Calu3 (cell line): ENCODE measurements at regions of chr12 and their contacts with region 1.

Region 1: GRCh38 chr12:109804820-109805761 is 28.1 kb downstream of the TRPV4 start:
- DNase-seq: peak; percentile 80
- H3K4me3 Mint-ChIP-seq: no peak overlapping the region
- H3K27ac Mint-ChIP-seq: no peak overlapping the region
- H3K4me1 Mint-ChIP-seq: no peaks in the 10 kb centered on the region
- H3K27me3 Mint-ChIP-seq: no peaks in the 10 kb centered on the region
- CTCF ChIP-seq: peak; percentile 97

Region 2: DNA sequence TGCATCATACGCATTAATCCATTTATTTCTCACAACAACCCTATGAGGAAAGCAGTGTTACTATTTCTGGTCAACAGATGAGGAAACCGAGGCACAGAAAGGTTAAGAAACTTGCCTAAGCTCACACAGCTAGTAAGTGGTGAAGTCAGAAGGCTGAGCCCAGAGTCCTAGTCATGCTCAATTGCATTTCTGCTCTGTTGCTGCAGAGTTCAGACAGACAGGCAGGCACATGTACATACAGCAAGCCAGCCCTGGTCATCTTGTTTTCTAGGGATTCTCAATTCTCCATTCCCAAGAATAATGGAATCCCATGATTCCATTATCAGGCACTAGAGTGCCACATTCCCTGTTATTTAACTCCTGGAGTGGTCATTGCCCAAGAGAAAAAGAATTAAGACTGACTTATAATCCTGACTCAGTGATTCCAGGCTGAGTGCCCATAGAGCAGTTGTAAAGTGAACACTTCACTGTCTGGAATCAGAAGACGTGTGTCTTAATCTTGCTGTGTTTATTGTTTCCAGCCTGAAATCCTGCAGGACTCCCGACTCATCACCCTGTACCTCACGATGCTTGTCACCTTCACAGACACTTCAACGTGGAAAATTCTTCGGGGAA is 316.9 kb before region 1 on chr12:
- CTCF ChIA-PET with region 1: no interaction called
- intact Hi-C with region 1: no loop called
- DNase-seq: no peak
- H3K4me3 Mint-ChIP-seq: no peak overlapping the region
- H3K27ac Mint-ChIP-seq: no peak overlapping the region
- H3K4me1 Mint-ChIP-seq: no peaks in the 10 kb centered on the region
- H3K27me3 Mint-ChIP-seq: no peaks in the 10 kb centered on the region
- CTCF ChIP-seq: no peak

Region 3: DNA sequence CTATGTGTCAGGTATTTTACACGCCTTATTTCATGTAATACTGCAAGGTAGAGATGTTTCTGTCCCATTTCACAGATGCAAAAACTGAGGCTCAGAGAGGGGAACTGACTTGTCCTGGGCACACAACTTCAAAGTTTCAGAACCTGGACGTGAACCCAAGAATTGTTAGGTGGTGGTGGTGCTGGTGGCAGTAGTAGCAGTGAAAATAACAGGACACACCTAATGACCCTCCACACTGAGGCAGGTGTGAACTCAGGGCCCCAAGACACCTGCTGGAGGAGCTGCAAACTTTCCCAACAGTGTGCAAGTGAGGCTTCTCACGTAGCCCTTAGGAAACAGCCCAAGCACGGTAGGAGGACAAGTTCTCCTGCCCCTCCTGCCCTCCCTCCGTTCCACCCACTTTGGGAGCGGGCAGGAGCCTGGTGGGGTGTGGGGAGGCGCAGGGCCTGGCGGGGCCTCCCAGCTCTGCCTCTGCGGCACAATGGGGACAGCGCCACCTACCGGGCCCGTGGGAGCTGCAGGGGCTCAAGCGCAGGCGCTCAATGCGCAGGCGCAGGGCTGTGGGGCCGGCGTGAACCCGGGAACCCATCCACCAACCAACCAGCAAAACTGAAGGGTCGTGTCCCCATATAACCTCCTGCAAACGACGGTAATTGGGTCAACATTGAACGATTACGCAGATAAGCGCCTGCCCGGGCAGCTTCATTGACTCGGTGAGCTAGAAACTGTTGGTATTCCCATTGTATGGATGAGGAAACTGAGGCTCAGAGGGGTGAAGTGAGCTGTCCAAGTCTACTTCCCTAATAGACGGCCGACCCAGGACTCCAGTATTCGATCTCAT is 40.1 kb after region 1 on chr12:
- CTCF ChIA-PET with region 1: interaction called, 24 read pairs
- intact Hi-C with region 1: loop called (anchors 1 kb)
- DNase-seq: peak; percentile 98
- H3K4me3 Mint-ChIP-seq: peak overlapping the region; percentile 28
- H3K27ac Mint-ChIP-seq: no peak overlapping the region
- H3K4me1 Mint-ChIP-seq: peaks cover 15% of the 10 kb centered on the region
- H3K27me3 Mint-ChIP-seq: no peaks in the 10 kb centered on the region
- CTCF ChIP-seq: peak; percentile 97

Region 4: GRCh38 chr12:109880016-109880931 is 75.2 kb after region 1 on chr12 and contains the start of gene GLTP:
- CTCF ChIA-PET with region 1: no interaction called
- intact Hi-C with region 1: loop called (anchors 2 kb)
- DNase-seq: peak; percentile 96
- H3K4me3 Mint-ChIP-seq: peak within 1 kb of the TSS; percentile 85
- H3K27ac Mint-ChIP-seq: peak within 1 kb of the TSS; percentile 91
- H3K4me1 Mint-ChIP-seq: peaks cover 20% of the 10 kb centered on the region
- H3K27me3 Mint-ChIP-seq: peaks cover 20% of the 10 kb centered on the region
- CTCF ChIP-seq: peak; percentile 52
- total RNA-seq, gene GLTP: 25.7 and 27.7 TPM in 2 replicates